AG04449 (cell line): ENCODE measurements at regions of chr2 and their contacts with region 1.

Region 1: GRCh38 chr2:219352448-219353023 is 20.0 kb upstream of the RESP18 start:
- DNase-seq: no peak
- H3K4me3 ChIP-seq: no peak overlapping the region
- CTCF ChIP-seq: peak; percentile 62

Region 2: DNA sequence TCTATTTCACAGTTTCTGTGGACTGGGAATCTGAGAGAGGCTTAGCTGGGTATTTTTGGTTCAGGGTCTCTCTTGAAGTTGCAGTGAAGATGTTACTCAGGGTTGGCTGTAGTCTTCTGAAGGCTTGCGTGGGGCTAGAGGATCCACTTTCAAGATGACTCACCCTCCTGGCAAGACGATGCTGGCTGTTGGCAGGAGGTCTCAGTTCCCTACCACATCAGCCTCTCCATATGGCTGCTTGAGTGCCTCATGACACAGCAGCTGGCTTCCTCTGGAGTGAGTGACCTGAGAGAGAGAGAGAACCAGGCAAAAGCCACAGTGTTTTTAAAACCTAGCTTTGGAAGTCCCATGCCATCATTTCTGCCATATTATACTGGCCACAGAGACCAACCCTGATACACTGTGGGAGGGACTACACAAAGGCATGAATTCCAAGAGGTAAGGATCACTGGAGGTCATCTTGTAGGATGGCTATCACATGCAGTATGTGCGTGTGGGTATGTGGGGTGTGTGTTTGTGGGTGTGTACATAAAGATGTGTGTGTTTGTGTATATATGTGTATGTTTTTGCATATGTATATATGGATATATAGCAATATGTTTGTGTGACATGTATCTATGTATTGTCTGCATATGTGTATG is 10.1 kb after region 1 on chr2:
- CTCF ChIA-PET with region 1: interaction called, 78 read pairs
- POLR2A ChIA-PET with region 1: no interaction called
- DNase-seq: peak; percentile 91
- H3K4me3 ChIP-seq: no peak overlapping the region
- CTCF ChIP-seq: no peak

Region 3: DNA sequence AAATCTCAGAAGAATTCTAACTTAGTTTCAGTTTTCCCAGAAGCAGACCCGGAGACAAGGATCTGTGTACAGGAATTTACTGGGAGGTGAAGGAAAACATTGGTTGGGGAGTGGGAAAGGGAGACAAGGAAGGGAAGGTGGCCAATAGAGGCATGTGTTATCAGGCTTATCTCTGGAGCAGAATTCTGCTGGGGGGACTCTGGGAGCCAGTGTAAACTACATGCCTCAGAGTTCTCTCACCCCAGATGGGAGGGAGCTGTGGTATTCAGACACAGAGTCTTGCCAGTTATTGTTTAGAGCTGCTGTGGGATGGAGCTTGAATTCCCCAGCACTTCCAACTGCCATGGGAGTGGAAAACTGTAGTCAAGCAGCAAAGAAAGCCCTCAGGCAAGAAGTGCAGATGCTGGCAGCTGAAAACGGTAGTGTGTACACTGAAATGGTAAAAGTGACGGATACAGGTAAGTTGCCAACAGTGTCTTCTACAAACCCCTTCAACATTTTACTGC is 16.2 kb after region 1 on chr2:
- CTCF ChIA-PET with region 1: interaction called, 78 read pairs
- POLR2A ChIA-PET with region 1: no interaction called
- DNase-seq: peak; percentile 77
- H3K4me3 ChIP-seq: peak overlapping the region; percentile 36
- CTCF ChIP-seq: no peak